Ovary (tissue), 10 donors: ENCODE measurements at regions of chr16 and their contacts with region 1.

Region 1: GRCh38 chr16:4330277-4330874 is 14.5 kb downstream of the GLIS2 start:
- DNase-seq: peak; percentile 75 to 88 (median 87)
- H3K4me3 ChIP-seq: no peak overlapping the region
- H3K27ac ChIP-seq: no peak overlapping the region
- H3K4me1 ChIP-seq: peaks cover 19% of the 10 kb centered on the region
- H3K27me3 ChIP-seq: no peaks in the 10 kb centered on the region
- CTCF ChIP-seq: peak; percentile 75 to 95 (median 94)
- EP300 ChIP-seq: no peak
- POLR2A ChIP-seq: peak; percentile 11

Region 2: DNA sequence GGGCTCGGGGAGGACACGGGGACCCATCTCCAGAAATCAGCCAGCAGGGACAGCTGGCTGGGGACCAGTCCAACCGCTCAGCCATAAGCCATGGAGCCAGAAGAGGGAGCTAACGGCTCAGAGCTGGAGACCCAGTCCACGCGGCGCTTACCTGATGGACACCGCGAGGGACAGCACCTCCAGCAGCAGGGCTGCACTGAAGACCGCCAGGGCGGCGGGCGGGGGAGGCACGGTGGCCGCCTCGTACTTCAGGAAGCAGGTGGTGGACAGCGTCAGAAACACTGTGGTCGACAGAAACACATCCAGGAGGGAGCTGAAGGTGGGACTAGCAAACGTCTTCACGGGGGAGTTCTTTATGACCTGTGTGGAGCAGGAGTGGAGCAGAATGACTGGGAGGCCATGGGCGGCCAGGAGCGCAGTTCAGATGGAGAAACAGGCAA is 347.3 kb before region 1 on chr16:
- intact Hi-C with region 1: loop called in 1 of 4 experiments (anchors 10 kb)
- DNase-seq: peak; percentile 70 to 79 (median 77)
- H3K4me3 ChIP-seq: no peak overlapping the region
- H3K27ac ChIP-seq: no peak overlapping the region
- H3K4me1 ChIP-seq: peaks cover 3% of the 10 kb centered on the region
- H3K27me3 ChIP-seq: no peaks in the 10 kb centered on the region
- CTCF ChIP-seq: peak; percentile 58 to 68 (median 59)
- EP300 ChIP-seq: no peak
- POLR2A ChIP-seq: no peak

Region 3: DNA sequence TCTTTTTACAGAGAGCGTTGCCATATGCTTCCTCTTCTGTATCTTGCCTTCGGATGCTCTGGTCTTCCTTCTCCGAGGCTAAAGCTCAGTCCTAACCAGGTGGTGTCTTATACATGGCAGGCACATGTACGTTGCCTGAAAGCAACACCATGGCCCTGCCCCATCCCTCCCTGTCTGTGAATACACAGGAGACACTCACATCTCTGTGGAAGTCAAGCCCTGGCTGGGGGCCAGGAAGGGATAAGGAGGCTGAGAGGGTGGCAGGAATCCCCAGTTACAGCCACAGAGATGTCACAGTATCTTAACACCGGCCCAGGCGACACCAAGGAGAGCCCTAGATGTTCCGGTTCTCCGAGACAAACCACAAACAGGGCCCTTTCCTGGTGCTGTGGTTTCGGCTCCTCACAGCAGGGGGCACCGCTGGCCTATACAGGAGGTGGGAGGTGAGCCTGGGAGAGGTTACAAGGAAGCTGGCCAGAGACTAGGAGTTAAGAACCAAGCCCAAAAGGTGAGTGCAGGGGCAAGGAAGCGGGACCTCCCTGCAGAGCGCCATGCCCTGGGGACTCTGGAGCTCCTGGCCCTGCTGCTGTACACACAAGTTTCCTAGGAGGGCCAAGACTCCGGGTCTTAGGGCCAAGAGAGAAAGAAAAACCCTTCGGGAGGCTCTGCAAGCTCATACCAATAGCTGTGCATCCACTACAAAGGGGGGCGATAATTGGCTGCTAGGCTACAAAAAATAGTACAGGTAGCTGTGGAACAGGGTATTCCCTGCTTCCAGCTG is 130.2 kb before region 1 on chr16:
- intact Hi-C with region 1: loop called in 3 of 4 experiments (anchors 2 to 5 kb)
- DNase-seq: peak; percentile 73 to 84 (median 75)
- H3K4me3 ChIP-seq: no peak overlapping the region
- H3K27ac ChIP-seq: no peak overlapping the region
- H3K4me1 ChIP-seq: peaks cover 3% of the 10 kb centered on the region
- H3K27me3 ChIP-seq: no peaks in the 10 kb centered on the region
- CTCF ChIP-seq: peak; percentile 46 to 76 (median 68)
- EP300 ChIP-seq: no peak
- POLR2A ChIP-seq: no peak

Region 4: DNA sequence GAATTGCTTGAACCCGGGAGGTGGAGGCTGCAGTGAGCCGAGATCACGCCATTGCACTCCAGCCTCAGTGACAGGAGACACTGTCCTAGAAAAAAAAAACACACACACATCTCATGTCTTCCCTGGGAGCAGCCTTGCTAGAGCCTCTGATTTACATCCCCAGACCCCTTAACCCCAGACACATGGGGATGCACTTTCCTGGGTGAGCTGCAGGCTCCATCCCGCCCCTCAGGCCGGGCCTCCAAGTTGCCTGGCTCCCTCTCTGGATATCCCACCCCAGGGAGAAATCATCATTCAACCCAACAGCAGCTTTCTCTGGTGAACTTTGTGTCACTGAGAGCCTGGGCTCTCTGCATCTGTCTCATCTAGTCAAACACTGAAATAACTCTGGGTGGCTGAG is 110.0 kb before region 1 on chr16:
- intact Hi-C with region 1: no loop called
- DNase-seq: no peak
- H3K4me3 ChIP-seq: no peak overlapping the region
- H3K27ac ChIP-seq: no peak overlapping the region
- H3K4me1 ChIP-seq: peaks cover 9% of the 10 kb centered on the region
- H3K27me3 ChIP-seq: no peaks in the 10 kb centered on the region
- CTCF ChIP-seq: no peak
- EP300 ChIP-seq: no peak
- POLR2A ChIP-seq: no peak

Region 5: GRCh38 chr16:4261557-4262172 is 68.7 kb before region 1 on chr16:
- intact Hi-C with region 1: loop called in 2 of 4 experiments (anchors 10 kb)
- DNase-seq: peak; percentile 37 to 71 (median 66)
- H3K4me3 ChIP-seq: no peak overlapping the region
- H3K27ac ChIP-seq: no peak overlapping the region
- H3K4me1 ChIP-seq: peaks cover 10% of the 10 kb centered on the region
- H3K27me3 ChIP-seq: no peaks in the 10 kb centered on the region
- CTCF ChIP-seq: peak; percentile 42 to 58 (median 58)
- EP300 ChIP-seq: no peak
- POLR2A ChIP-seq: no peak

Region 6: DNA sequence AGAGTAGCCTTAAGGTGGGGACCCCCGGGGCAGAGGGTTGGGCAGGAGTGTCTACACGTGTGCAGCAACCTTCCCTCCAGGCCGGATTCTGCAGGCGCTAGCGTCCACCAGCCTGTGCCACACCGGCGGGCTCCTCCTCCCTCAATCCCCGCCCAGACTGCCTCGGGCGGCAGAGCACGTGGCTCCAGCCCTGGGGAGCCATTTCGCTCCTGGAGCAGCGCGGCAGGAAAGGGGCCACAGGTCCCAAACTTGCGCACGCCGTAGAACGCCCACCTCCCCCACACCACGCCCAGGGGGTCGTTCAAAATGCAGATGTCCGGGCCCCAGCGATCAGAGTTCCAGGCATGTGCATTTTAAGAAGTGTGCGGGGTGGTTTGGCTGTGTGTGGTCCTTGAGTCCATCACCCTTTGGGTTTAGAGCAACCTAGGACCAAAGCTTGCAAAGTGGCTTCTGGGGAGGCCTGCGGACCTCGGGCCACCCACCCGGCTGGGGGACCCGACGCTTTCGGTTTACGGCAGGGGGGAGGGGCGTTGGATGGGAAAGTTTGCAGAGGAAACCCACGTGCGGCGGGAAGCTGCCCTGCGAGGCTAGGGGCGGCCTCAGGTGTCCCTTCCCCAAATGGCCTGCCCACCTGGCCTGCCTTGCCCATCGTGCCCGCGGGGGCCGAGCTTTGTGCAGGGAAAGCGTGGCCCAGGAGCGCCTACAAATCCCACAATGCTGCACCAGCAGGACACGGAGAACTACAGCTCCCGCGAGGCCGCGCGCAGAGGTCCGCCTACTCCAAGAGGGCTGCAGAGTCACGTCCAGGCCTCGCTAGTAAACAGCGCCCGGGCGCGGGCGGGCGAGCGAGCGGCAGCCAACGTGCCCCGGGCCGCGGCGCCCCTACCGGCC is 59.0 kb before region 1 on chr16:
- intact Hi-C with region 1: loop called in 3 of 4 experiments (anchors 5 to 10 kb)
- DNase-seq: peak; percentile 86 to 92 (median 89)
- H3K4me3 ChIP-seq: peak overlapping the region; percentile 88
- H3K27ac ChIP-seq: peak overlapping the region; percentile 78 to 81
- H3K4me1 ChIP-seq: peaks cover 7% of the 10 kb centered on the region
- H3K27me3 ChIP-seq: no peaks in the 10 kb centered on the region
- CTCF ChIP-seq: peak in 1 of 3 donors; percentile 21
- EP300 ChIP-seq: no peak
- POLR2A ChIP-seq: peak; percentile 21

Region 7: GRCh38 chr16:4288148-4288921 is 42.0 kb before region 1 on chr16:
- intact Hi-C with region 1: loop called (anchors 2 to 5 kb)
- DNase-seq: peak; percentile 72 to 86 (median 82)
- H3K4me3 ChIP-seq: peak overlapping the region; percentile 12
- H3K27ac ChIP-seq: no peak overlapping the region
- H3K4me1 ChIP-seq: peaks cover 7% of the 10 kb centered on the region
- H3K27me3 ChIP-seq: no peaks in the 10 kb centered on the region
- CTCF ChIP-seq: peak; percentile 80 to 96 (median 92)
- EP300 ChIP-seq: no peak
- POLR2A ChIP-seq: no peak

Region 8: GRCh38 chr16:4293822-4294457 is 36.4 kb before region 1 on chr16:
- intact Hi-C with region 1: loop called (anchors 2 to 5 kb)
- DNase-seq: peak; percentile 61 to 73 (median 67)
- H3K4me3 ChIP-seq: no peak overlapping the region
- H3K27ac ChIP-seq: peak overlapping the region in 1 of 2 donors; percentile 49
- H3K4me1 ChIP-seq: peaks cover 16% of the 10 kb centered on the region
- H3K27me3 ChIP-seq: no peaks in the 10 kb centered on the region
- CTCF ChIP-seq: no peak
- EP300 ChIP-seq: no peak
- POLR2A ChIP-seq: no peak